ENCODE measurements at regions of chr14 and their contacts with region 1.

Region 1: GRCh38 chr14:61461808-61462275 is 140.5 kb downstream of the PRKCH start:
- DNase-seq: peak; percentile 63
- H3K4me3 ChIP-seq: no peak overlapping the region
- H3K27ac ChIP-seq: peak overlapping the region; percentile 28
- H3K4me1 ChIP-seq: peaks cover 37% of the 10 kb centered on the region
- H3K27me3 ChIP-seq: no peaks in the 10 kb centered on the region
- CTCF ChIP-seq: peak; percentile 53 to 59

Region 2: GRCh38 chr14:60575008-60575407 is 886.8 kb before region 1 on chr14:
- CTCF ChIA-PET with region 1: no interaction called
- dilution Hi-C with region 1: no loop called
- in situ Hi-C with region 1: no loop called
- intact Hi-C with region 1: no loop called
- DNase-seq: no peak
- H3K4me3 ChIP-seq: no peak overlapping the region
- H3K27ac ChIP-seq: no peak overlapping the region
- H3K4me1 ChIP-seq: no peaks in the 10 kb centered on the region
- H3K27me3 ChIP-seq: no peaks in the 10 kb centered on the region
- CTCF ChIP-seq: no peak

Region 3: GRCh38 chr14:61444215-61444768 is 17.6 kb before region 1 on chr14:
- CTCF ChIA-PET with region 1: no interaction called
- dilution Hi-C with region 1: no loop called
- in situ Hi-C with region 1: no loop called
- intact Hi-C with region 1: no loop called
- DNase-seq: no peak
- H3K4me3 ChIP-seq: no peak overlapping the region
- H3K27ac ChIP-seq: no peak overlapping the region
- H3K4me1 ChIP-seq: peaks cover 3% of the 10 kb centered on the region
- H3K27me3 ChIP-seq: no peaks in the 10 kb centered on the region
- CTCF ChIP-seq: no peak

Region 4: DNA sequence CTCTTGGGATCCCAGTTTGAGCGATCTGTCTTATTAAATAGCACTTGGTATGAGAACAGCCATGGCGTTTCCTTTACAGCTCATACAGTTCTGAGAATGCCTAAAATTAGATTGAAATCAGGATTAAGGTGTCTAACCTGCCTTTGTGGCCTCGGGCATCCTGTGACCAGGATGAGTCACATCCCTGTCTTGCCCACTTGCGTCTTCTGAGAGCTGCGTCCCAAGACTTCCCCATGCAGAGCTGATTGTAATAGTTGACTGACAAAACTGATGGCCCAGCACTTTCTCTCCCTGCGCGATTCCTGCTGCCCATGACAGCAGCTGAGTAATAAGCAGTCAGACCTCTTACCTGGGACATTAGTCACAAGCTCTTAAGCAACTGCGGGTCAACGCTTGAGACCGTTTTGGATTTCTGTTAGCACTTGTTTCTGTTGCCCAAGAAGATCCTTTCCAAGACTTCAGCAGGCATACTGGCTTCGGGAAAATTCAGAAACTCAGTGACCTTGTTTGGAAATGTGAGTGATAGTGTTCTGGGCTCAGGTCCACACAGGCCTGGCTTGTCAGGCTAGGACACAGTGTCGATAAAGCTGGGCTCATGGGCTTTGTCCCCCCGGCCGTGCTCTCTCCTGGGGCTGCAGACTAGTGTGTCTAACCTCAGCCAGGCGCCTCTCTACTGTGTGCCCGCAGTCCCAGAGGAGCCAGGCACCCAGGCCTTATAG is 63.6 kb after region 1 on chr14:
- CTCF ChIA-PET with region 1: no interaction called
- dilution Hi-C with region 1: no loop called
- in situ Hi-C with region 1: no loop called
- intact Hi-C with region 1: no loop called
- DNase-seq: peak; percentile 100
- H3K4me3 ChIP-seq: no peak overlapping the region
- H3K27ac ChIP-seq: peak overlapping the region; percentile 89
- H3K4me1 ChIP-seq: peaks cover 62% of the 10 kb centered on the region
- H3K27me3 ChIP-seq: no peaks in the 10 kb centered on the region
- CTCF ChIP-seq: no peak

Region 5: GRCh38 chr14:61730756-61731373 is 269.0 kb after region 1 on chr14:
- CTCF ChIA-PET with region 1: no interaction called
- dilution Hi-C with region 1: no loop called
- in situ Hi-C with region 1: loop called (anchors 10 kb)
- intact Hi-C with region 1: loop called (anchors 1 kb)
- DNase-seq: no peak
- H3K4me3 ChIP-seq: no peak overlapping the region
- H3K27ac ChIP-seq: no peak overlapping the region
- H3K4me1 ChIP-seq: peaks cover 14% of the 10 kb centered on the region
- H3K27me3 ChIP-seq: no peaks in the 10 kb centered on the region
- CTCF ChIP-seq: peak; percentile 14 to 40

Region 6: DNA sequence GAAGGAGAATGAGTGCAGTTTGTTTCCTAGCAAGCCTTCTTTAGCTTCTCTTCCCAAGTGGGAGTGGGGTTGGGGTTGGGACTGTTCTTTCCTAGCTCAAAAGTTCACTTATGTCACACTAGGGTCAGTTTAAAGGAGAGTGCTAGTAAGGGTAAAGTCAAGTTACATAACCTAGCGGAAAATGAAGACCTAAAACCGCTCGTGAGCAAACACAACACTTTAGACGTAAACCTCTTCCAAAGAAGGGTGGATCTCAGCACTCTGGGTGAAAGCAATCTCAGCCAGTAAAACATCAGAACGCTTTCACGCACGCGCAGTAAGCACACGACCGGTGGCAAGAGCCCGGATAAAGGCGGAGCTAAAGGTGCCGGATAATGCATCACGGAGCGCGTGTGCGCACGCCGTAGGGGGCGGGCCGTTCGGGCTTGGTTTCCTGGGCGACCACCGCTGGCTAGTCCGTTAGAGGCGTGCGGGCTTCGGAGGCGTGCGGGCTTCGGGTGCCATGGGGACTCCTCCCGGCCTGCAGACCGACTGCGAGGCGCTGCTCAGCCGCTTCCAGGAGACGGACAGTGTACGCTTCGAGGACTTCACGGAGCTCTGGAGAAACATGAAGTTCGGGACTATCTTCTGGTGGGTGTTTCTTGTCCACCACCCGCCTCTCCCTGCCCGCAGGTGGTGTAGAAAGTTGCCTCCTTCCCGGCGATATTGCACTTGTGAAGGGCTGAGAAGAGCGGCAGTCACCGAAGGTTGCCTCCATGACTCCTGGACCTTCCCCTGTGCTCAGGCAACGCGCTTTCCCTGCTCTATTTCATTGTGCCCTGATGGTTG is 300.3 kb after region 1 on chr14 and contains the start of gene SNAPC1:
- CTCF ChIA-PET with region 1: no interaction called
- dilution Hi-C with region 1: no loop called
- in situ Hi-C with region 1: no loop called
- intact Hi-C with region 1: loop called (anchors 1 kb)
- DNase-seq: peak; percentile 95
- H3K4me3 ChIP-seq: peak within 1 kb of the TSS; percentile 64 to 84 (median 77)
- H3K27ac ChIP-seq: peak within 1 kb of the TSS; percentile 77
- H3K4me1 ChIP-seq: peaks cover 17% of the 10 kb centered on the region
- H3K27me3 ChIP-seq: no peaks in the 10 kb centered on the region
- CTCF ChIP-seq: no peak
- total RNA-seq, gene SNAPC1: 12.2 to 13.0 TPM

Region 7: DNA sequence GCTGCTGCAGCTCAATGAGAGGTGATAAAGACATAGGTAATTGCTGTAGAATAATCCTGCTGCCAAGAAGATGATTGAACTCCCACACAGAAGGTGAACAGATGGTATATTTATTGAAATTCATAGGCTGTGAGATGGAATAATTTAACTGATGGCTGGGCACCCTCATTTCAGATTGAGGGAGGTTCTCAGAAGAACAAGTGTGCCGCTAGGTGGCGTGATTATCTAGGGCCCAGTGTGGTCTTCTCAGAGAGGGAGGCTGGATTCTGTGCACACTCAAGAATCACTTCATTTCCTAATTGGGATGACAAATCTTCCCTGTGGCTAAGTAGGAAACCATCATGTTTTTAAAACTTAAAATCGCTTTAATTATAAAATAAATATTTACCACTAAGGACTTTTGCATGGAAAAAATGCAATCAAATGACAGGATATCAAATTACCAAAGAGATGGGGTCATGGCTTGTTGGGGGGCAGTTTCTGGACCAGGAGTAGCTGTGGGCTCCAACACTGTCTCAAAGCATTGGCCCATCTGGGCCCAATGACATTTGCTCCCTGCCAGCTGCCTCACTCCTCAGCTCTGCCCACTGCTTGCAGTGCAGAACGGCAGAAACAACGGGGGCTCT is 432.7 kb after region 1 on chr14:
- CTCF ChIA-PET with region 1: no interaction called
- dilution Hi-C with region 1: no loop called
- in situ Hi-C with region 1: no loop called
- intact Hi-C with region 1: loop called (anchors 5 kb)
- DNase-seq: peak; percentile 56
- H3K4me3 ChIP-seq: no peak overlapping the region
- H3K27ac ChIP-seq: no peak overlapping the region
- H3K4me1 ChIP-seq: no peaks in the 10 kb centered on the region
- H3K27me3 ChIP-seq: no peaks in the 10 kb centered on the region
- CTCF ChIP-seq: peak; percentile 79 to 84